Activated CD8-positive, alpha-beta T cell treated with anti-CD3 and anti-CD28 coated beads for 36 hours (primary cell): ENCODE measurements at regions of chr17 and their contacts with region 1.

Region 1: GRCh38 chr17:46212634-46213435 is 19.6 kb upstream of the KANSL1 start:
- DNase-seq: peak; percentile 74
- ATAC-seq: peak; percentile 73
- H3K4me3 Mint-ChIP-seq: no peak overlapping the region
- H3K27ac Mint-ChIP-seq: peak overlapping the region; percentile 4
- H3K4me1 Mint-ChIP-seq: peaks cover 23% of the 10 kb centered on the region
- H3K27me3 Mint-ChIP-seq: no peaks in the 10 kb centered on the region
- CTCF ChIP-seq: peak; percentile 87

Region 2: DNA sequence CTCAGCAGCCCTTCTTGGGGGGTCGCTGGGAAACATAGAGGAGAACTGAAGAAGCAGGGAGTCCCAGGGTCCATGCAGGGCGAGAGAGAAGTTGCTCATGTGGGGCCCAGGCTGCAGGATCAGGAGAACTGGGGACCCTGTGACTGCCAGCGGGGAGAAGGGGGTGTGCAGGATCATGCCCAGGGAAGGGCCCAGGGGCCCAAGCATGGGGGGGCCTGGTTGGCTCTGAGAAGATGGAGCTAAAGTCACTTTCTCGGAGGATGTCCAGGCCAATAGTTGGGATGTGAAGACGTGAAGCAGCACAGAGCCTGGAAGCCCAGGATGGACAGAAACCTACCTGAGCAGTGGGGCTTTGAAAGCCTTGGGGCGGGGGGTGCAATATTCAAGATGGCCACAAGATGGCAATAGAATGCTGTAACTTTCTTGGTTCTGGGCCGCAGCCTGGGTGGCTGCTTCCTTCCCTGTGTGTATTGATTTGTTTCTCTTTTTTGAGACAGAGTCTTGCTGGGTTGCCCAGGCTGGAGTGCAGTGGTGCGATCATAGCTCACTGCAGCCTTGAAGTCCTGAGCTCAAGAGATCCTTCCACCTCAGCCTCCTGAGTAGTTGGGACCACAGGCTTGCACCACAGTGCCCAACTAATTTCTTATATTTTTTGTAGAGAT is 210.4 kb before region 1 on chr17:
- CTCF ChIA-PET with region 1: interaction called, 46 read pairs
- POLR2A ChIA-PET with region 1: no interaction called
- intact Hi-C with region 1: loop called (anchors 2 kb)
- DNase-seq: peak; percentile 84
- ATAC-seq: peak; percentile 99
- H3K4me3 Mint-ChIP-seq: no peak overlapping the region
- H3K27ac Mint-ChIP-seq: no peak overlapping the region
- H3K4me1 Mint-ChIP-seq: no peaks in the 10 kb centered on the region
- H3K27me3 Mint-ChIP-seq: no peaks in the 10 kb centered on the region
- CTCF ChIP-seq: peak; percentile 85

Region 3: GRCh38 chr17:46035112-46035818 is 177.6 kb before region 1 on chr17:
- CTCF ChIA-PET with region 1: interaction called, 20 read pairs
- POLR2A ChIA-PET with region 1: no interaction called
- intact Hi-C with region 1: no loop called
- DNase-seq: peak; percentile 58
- ATAC-seq: peak; percentile 60
- H3K4me3 Mint-ChIP-seq: no peak overlapping the region
- H3K27ac Mint-ChIP-seq: peak overlapping the region; percentile 37
- H3K4me1 Mint-ChIP-seq: peaks cover 15% of the 10 kb centered on the region
- H3K27me3 Mint-ChIP-seq: no peaks in the 10 kb centered on the region
- CTCF ChIP-seq: no peak

Region 4: DNA sequence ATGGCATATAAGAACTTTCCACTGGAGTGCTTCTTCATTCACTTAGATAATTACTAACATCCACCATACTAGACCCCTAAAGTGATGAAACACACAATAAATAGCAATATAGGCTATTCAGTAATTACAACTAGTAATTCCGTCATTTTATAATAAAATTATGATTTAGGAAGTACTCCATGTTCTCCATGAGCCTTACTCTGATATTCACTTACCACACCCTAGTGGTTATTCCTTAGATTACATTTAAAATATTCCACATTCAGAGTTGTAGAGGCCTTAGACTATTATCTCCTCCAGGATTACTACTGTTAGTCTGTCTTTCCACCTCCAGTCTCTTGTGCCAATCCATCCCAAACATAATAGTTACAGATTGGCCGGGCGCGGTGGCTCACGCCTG is 151.4 kb before region 1 on chr17:
- CTCF ChIA-PET with region 1: interaction called, 19 read pairs
- POLR2A ChIA-PET with region 1: no interaction called
- intact Hi-C with region 1: no loop called
- DNase-seq: no peak
- ATAC-seq: no peak
- H3K4me3 Mint-ChIP-seq: no peak overlapping the region
- H3K27ac Mint-ChIP-seq: no peak overlapping the region
- H3K4me1 Mint-ChIP-seq: peaks cover 38% of the 10 kb centered on the region
- H3K27me3 Mint-ChIP-seq: no peaks in the 10 kb centered on the region
- CTCF ChIP-seq: peak; percentile 54

Region 5: GRCh38 chr17:46121841-46122485 is 90.9 kb before region 1 on chr17:
- CTCF ChIA-PET with region 1: interaction called, 10 read pairs
- POLR2A ChIA-PET with region 1: no interaction called
- intact Hi-C with region 1: no loop called
- DNase-seq: peak; percentile 43
- ATAC-seq: peak; percentile 74
- H3K4me3 Mint-ChIP-seq: peak overlapping the region; percentile 34
- H3K27ac Mint-ChIP-seq: peak overlapping the region; percentile 62
- H3K4me1 Mint-ChIP-seq: peaks cover 81% of the 10 kb centered on the region
- H3K27me3 Mint-ChIP-seq: no peaks in the 10 kb centered on the region
- CTCF ChIP-seq: no peak

Region 6: DNA sequence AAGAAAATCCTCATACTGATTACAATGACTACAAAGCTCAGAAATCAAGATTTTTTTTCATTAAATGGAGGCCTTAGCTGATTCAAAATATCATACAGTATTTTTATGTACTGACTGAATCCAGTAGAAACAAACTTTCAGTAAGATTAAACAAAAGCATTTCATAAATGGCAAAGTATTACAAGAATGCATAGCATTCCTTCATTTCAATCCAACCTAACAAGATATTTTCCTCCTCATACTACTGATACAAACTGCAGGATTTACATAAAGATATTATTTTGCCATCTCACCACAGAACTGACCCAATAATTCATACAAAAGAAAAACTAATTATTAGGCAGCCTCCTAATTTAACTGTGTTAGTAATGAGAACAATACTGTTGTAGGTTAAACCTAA is 13.5 kb before region 1 on chr17:
- CTCF ChIA-PET with region 1: interaction called, 35 read pairs
- POLR2A ChIA-PET with region 1: interaction called, 3 read pairs
- intact Hi-C with region 1: no loop called
- DNase-seq: no peak
- ATAC-seq: no peak
- H3K4me3 Mint-ChIP-seq: no peak overlapping the region
- H3K27ac Mint-ChIP-seq: no peak overlapping the region
- H3K4me1 Mint-ChIP-seq: peaks cover 53% of the 10 kb centered on the region
- H3K27me3 Mint-ChIP-seq: no peaks in the 10 kb centered on the region
- CTCF ChIP-seq: no peak